Naive thymus-derived CD8-positive, alpha-beta T cell (primary cell): ENCODE measurements at regions of chr19 and their contacts with region 1.

Region 1: DNA sequence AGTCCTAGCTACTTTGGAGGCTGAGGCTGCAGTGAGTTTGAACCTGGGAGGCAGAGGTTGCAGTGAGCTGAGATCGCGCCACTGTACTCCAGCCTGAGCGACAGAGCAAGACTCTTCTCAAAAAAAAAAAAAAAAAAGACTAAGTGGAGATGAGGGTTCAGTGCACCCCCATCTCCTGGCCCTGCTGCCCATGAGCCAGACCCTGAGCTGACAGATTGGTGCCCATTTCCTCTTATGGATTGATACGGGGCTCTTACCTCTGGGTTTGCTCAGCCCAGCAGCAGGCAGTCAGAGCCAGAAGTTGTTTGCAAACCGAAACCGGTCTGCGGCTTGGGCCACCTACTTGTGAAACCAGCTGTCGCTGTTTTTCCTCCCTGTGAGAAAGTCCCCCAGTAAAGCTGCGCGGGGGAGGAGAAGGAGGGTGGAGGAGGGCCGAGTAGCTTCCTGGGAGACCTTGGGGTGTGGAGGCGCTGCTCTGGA is 36.9 kb downstream of the ARRDC2 start:
- DNase-seq: peak; percentile 61 to 91 (median 80)
- ATAC-seq: peak; percentile 97 to 99
- H3K4me3 Mint-ChIP-seq: peak overlapping the region; percentile 77 to 89 (median 84)
- H3K27ac Mint-ChIP-seq: peak overlapping the region; percentile 87 to 99 (median 95)
- H3K4me1 Mint-ChIP-seq: peaks cover 19 to 55% (median 49%) of the 10 kb centered on the region in 4 donors
- H3K27me3 Mint-ChIP-seq: no peaks in the 10 kb centered on the region

Region 2: DNA sequence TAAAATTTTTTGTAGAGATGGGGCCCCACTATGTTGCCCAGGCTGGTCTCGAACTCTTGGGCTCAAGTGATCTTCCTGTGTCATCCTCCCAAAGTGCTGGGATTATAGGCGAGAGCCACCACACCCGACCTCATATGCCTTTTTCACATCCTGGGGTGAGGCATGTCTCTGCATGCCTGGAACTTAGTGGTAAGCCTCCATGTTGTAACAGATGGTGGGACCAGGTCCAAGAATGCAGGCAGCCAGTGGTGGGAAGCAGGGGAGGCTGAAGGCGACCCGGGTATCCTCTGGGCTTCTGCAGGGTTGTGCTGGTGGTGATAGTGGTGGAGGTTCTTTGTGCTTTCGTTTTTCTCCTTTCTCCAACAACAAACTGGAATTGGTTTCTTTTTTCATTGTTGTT is 142.2 kb before region 1 on chr19:
- POLR2A ChIA-PET with region 1: no interaction called
- DNase-seq: no peak
- ATAC-seq: no peak
- H3K4me3 Mint-ChIP-seq: no peak overlapping the region
- H3K27ac Mint-ChIP-seq: no peak overlapping the region
- H3K4me1 Mint-ChIP-seq: no peaks in the 10 kb centered on the region
- H3K27me3 Mint-ChIP-seq: peaks cover 9 to 18% (median 10%) of the 10 kb centered on the region in 5 donors

Region 3: GRCh38 chr19:18007044-18007916 is 37.6 kb before region 1 on chr19:
- POLR2A ChIA-PET with region 1: interaction called, 267 read pairs
- DNase-seq: peak; percentile 67 to 87 (median 82)
- ATAC-seq: peak; percentile 60 to 61
- H3K4me3 Mint-ChIP-seq: peak overlapping the region; percentile 84 to 98 (median 93)
- H3K27ac Mint-ChIP-seq: peak overlapping the region; percentile 68 to 99 (median 96)
- H3K4me1 Mint-ChIP-seq: peaks cover 13 to 52% (median 34%) of the 10 kb centered on the region in 4 donors
- H3K27me3 Mint-ChIP-seq: no peaks in the 10 kb centered on the region

Region 4: DNA sequence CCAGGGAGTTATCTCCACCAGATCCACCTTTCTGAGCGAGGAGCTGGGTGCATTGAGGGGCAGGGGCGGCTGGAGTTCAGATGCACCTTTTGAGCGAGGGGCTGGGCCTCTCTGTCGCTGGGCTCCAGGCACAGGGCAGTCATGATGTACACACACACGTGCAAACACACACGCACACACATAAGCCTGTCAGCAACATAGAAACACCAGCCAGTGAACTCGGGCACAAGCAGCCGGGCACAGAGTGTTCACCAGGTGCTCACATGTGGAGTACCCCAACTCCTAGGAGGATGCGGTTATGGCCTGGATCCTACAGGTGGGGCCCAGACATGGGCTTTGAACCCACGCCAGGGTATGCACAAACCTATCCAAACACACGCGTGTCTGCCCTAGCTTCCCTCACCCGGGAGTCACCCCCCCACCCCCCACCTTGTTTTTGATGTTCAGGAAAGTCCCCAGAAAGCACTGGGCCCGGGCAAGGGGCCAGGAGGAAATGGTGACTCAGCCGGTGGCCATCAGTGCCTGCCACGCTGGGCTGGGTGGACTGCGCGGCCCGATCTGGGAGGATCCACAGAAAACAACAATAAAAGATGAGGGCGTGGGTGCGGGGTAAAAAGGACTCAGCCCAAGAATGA is 23.6 kb before region 1 on chr19:
- POLR2A ChIA-PET with region 1: interaction called, 267 read pairs
- DNase-seq: peak; percentile 50 to 89 (median 65)
- ATAC-seq: peak; percentile 43 to 67
- H3K4me3 Mint-ChIP-seq: peak overlapping the region; percentile 22 to 82 (median 74)
- H3K27ac Mint-ChIP-seq: peak overlapping the region; percentile 91 to 99 (median 98)
- H3K4me1 Mint-ChIP-seq: peaks cover 42 to 79% (median 73%) of the 10 kb centered on the region in 4 donors
- H3K27me3 Mint-ChIP-seq: peaks cover 0 to 1% (median 0%) of the 10 kb centered on the region in 5 donors

Region 5: GRCh38 chr19:18058208-18059030 is 13.6 kb after region 1 on chr19:
- POLR2A ChIA-PET with region 1: interaction called, 48 read pairs
- DNase-seq: peak; percentile 73 to 91 (median 84)
- ATAC-seq: peak; percentile 94 to 96
- H3K4me3 Mint-ChIP-seq: peak overlapping the region in 8 of 10 donors; percentile 29 to 69 (median 48)
- H3K27ac Mint-ChIP-seq: peak overlapping the region; percentile 54 to 94 (median 86)
- H3K4me1 Mint-ChIP-seq: peaks cover 7 to 22% (median 17%) of the 10 kb centered on the region in 4 donors
- H3K27me3 Mint-ChIP-seq: no peaks in the 10 kb centered on the region

Region 6: DNA sequence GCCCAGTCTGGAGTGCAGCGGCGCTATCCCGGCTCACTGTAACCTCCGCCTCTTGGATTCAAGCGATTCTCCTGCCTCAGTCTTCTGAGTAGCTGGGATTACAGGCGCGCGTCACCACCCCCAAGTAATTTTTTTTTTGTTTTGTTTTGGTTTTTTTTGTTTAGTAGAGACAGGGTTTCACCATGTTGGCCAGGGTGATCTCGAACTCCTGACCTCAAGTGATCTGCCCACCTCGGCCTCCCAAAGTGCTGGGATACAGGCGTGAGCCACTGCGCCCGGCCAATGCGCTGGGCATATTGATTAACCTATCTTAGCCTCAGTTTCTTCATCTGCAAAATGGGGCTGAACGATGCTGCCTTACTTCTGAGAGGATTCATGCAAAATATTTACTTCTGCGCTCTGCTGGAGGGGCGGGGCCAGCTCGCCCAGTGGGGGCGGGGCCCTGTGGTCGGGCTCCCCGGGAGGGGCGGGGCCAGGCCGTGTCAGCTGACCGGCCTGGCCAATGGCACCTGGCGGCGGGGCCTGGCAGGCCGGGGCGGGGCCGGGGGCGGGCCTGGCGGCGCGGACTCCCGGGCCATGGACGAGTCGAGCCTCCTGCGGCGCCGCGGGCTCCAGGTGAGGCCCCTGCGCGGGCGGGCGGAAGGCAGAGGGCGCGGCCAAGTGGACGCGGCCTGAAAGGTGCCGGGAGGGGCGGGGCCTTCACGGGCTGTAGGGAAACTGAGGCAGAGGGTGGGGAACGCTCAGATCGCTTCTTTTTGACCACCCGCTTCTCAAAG is 52.5 kb after region 1 on chr19 and contains the start of gene MAST3:
- POLR2A ChIA-PET with region 1: interaction called, 12 read pairs
- DNase-seq: peak; percentile 83 to 95 (median 92)
- ATAC-seq: peak; percentile 87 to 92
- H3K4me3 Mint-ChIP-seq: peak within 1 kb of the TSS; percentile 82 to 96 (median 88)
- H3K27ac Mint-ChIP-seq: peak within 1 kb of the TSS; percentile 74 to 94 (median 86)
- H3K4me1 Mint-ChIP-seq: peaks cover 21 to 51% (median 40%) of the 10 kb centered on the region in 4 donors
- H3K27me3 Mint-ChIP-seq: no peaks in the 10 kb centered on the region
- polyA plus RNA-seq, gene MAST3: 9.4 to 15.7 (median 11.5) TPM